Activated T-helper 1 cell treated with anti-CD3 and anti-CD28 coated beads, Interleukin-12 subunit alpha, Interleukin-12 subunit beta, Interleukin-2, Interleukin-4 antibody, amounts not matched to agents 30 ng/mL and 10 ng/mL and 1 ng/mL, durations not matched to agents 14 hours and 24 hours and 36 hours (primary cell): ENCODE measurements at regions of chr9 and their contacts with region 1.

Region 1: DNA sequence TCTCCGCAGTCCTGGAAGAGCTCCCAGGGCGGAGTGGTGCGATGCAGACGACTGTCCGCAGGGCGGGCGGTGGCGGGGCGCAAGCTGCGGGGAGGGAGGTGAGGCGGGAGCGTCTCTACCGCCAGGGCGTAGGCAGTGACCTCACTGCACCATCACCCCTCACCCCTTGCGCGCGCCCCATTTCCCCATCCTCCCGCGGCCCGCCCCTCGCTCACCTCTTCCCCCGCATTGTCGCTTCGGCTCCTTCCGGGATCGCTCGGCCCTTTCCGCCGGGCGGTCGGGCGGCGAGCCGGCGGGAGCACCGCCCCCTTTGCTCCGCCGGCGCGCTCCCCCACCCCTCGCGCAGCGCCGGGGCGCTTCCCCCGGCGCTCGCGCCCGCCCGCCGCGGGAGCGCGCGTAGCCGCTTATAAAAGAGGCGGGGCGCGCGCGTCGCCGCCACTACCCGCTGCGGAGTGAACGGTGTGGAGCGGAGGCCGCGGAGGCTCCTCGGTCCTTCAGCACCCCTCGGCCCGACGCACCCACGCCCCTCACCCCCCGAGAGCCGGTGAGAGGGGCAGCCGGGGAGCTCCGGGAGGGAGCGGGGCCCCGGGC is at the start of gene SPTAN1:
- DNase-seq: peak; percentile 93
- H3K4me3 Mint-ChIP-seq: peak within 1 kb of the TSS; percentile 89
- H3K27ac Mint-ChIP-seq: peak within 1 kb of the TSS; percentile 91
- H3K4me1 Mint-ChIP-seq: peaks cover 43% of the 10 kb centered on the region
- H3K27me3 Mint-ChIP-seq: no peaks in the 10 kb centered on the region
- total RNA-seq, gene SPTAN1: 298 and 304 TPM in 2 replicates

Region 2: DNA sequence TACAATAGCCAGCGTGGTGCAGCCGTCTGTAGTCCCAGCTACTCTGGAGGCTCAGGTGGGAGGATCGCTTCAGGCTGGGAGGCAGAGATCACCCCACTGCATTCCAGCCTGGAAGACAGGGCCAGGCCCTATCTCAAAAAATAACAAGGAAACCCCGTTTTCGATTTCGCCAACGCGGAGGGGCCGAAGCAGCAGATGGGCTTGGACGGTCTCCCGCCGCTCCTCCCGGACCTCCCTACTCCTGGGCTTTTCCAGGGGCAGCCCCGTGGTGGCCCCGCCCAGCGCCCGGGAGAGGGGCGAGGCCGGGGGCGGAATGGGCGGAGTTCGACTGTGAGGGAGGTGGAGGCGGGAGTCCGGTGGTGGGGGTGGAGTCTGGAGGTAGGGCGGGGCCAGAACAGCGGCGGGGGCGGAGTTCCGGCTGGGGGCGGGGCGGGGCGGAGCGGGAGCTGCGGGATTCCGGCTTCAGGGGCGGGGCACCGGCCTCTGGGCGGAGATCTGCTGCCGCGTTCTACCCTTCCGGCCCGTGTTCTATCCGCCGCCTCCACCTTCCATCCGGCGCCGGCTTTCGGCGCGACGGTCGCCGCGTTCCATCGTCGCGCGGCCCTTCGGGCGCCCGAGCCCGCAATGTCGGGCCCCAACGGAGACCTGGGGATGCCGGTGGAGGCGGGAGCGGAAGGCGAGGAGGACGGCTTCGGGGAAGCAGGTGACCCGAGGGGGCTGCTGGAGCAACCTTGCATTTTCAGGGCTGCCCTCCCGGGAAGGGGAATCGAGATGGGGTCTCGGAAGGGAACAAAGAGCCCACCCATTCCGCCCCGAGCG is 392.3 kb before region 1 on chr9 and contains the start of gene BBLN:
- intact Hi-C with region 1: loop called (anchors 5 kb)
- DNase-seq: peak; percentile 88
- H3K4me3 Mint-ChIP-seq: peak within 1 kb of the TSS; percentile 84
- H3K27ac Mint-ChIP-seq: peak within 1 kb of the TSS; percentile 93
- H3K4me1 Mint-ChIP-seq: peaks cover 14% of the 10 kb centered on the region
- H3K27me3 Mint-ChIP-seq: peaks cover 2% of the 10 kb centered on the region
- total RNA-seq, gene BBLN: 97.3 and 106 TPM in 2 replicates

Region 3: DNA sequence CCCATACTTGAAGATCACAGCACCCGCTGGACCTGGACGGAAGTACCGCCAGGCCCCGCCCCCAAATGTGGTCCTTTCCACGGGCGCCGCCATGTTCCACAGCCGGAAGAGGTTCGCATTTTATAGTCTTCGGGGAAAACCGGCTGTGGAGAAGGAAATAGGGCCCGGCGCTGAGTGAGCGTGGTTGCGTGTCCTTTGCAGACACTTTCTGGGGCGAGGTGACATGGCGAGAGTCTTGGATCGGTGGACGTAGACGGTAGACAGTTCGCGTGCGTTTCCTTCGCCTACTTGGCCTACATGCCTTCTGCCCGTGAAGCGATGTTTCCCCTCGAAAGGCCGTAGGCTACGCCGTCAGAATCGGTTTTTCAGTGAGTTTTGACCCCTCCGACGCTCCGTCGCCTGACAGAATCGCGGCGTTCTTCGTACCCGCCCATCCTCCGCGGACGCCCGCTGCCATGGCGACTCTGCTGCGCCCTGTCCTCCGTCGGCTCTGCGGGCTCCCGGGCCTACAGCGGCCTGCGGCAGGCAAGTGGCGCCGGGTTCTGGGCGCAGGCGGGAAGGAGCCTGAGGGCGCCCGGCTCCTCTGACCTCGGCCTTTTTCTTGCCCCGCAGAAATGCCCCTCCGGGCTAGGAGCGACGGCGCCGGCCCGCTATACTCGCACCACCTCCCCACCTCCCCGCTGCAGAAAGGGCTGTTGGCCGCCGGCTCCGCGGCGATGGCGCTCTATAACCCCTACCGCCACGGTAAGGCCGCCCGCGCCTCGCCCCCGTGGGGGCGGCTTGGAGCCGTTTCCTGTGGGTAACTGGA is 229.6 kb before region 1 on chr9 and contains the starts of genes COQ4 and TRUB2:
- intact Hi-C with region 1: loop called (anchors 1 kb)
- DNase-seq: peak; percentile 91
- H3K4me3 Mint-ChIP-seq: peak within 1 kb of the TSS; percentile 98
- H3K27ac Mint-ChIP-seq: peak within 1 kb of the TSS; percentile 100
- H3K4me1 Mint-ChIP-seq: peaks cover 12% of the 10 kb centered on the region
- H3K27me3 Mint-ChIP-seq: peaks cover 2% of the 10 kb centered on the region
- total RNA-seq, gene COQ4: 59.0 and 59.5 TPM in 2 replicates
- total RNA-seq, gene TRUB2: 41.8 and 44.0 TPM in 2 replicates

Region 4: DNA sequence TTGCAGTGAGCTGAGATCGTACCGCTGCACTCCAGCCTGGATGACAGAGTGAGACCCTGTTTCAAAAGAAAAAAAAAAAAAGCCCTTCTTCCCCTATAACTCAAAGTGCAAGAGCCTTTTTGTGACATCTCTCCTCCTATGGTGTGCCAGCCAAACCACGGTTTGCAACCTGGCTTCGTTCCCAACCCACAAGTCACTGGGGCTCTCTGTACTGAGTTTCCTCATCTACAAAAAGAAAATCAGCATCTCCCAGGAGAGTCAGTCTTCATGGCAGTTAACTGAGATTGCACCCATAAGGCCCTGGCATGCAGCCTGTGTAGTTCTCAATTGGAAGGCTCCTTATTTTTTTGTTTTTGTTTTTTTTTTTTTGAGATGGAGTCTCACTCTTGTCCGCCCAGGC is 81.7 kb before region 1 on chr9:
- intact Hi-C with region 1: no loop called
- DNase-seq: no peak
- H3K4me3 Mint-ChIP-seq: no peak overlapping the region
- H3K27ac Mint-ChIP-seq: no peak overlapping the region
- H3K4me1 Mint-ChIP-seq: no peaks in the 10 kb centered on the region
- H3K27me3 Mint-ChIP-seq: no peaks in the 10 kb centered on the region

Region 5: GRCh38 chr9:128504485-128505413 is 47.5 kb before region 1 on chr9 and contains the start of gene GLE1:
- intact Hi-C with region 1: loop called (anchors 1 kb)
- DNase-seq: peak; percentile 97
- H3K4me3 Mint-ChIP-seq: peak within 1 kb of the TSS; percentile 99
- H3K27ac Mint-ChIP-seq: peak within 1 kb of the TSS; percentile 99
- H3K4me1 Mint-ChIP-seq: peaks cover 23% of the 10 kb centered on the region
- H3K27me3 Mint-ChIP-seq: no peaks in the 10 kb centered on the region
- total RNA-seq, gene GLE1: 51.4 and 52.0 TPM in 2 replicates

Region 6: GRCh38 chr9:128521956-128522355 is 30.3 kb before region 1 on chr9:
- intact Hi-C with region 1: no loop called
- DNase-seq: no peak
- H3K4me3 Mint-ChIP-seq: no peak overlapping the region
- H3K27ac Mint-ChIP-seq: no peak overlapping the region
- H3K4me1 Mint-ChIP-seq: no peaks in the 10 kb centered on the region
- H3K27me3 Mint-ChIP-seq: no peaks in the 10 kb centered on the region

Region 7: GRCh38 chr9:128593039-128593438 is 40.8 kb after region 1 on chr9:
- intact Hi-C with region 1: no loop called
- DNase-seq: no peak
- H3K4me3 Mint-ChIP-seq: no peak overlapping the region
- H3K27ac Mint-ChIP-seq: no peak overlapping the region
- H3K4me1 Mint-ChIP-seq: no peaks in the 10 kb centered on the region
- H3K27me3 Mint-ChIP-seq: no peaks in the 10 kb centered on the region

Region 8: GRCh38 chr9:128688512-128689292 is 136.5 kb after region 1 on chr9 and contains the start of gene SET:
- intact Hi-C with region 1: loop called (anchors 2 kb)
- DNase-seq: peak; percentile 93
- H3K4me3 Mint-ChIP-seq: peak within 1 kb of the TSS; percentile 87
- H3K27ac Mint-ChIP-seq: peak within 1 kb of the TSS; percentile 98
- H3K4me1 Mint-ChIP-seq: peaks cover 66% of the 10 kb centered on the region
- H3K27me3 Mint-ChIP-seq: no peaks in the 10 kb centered on the region
- total RNA-seq, gene SET: 775 and 795 TPM in 2 replicates

Region 9: GRCh38 chr9:128902351-128903078 is 350.3 kb after region 1 on chr9:
- intact Hi-C with region 1: loop called (anchors 5 kb)
- DNase-seq: peak; percentile 83
- H3K4me3 Mint-ChIP-seq: peak overlapping the region; percentile 66
- H3K27ac Mint-ChIP-seq: peak overlapping the region; percentile 96
- H3K4me1 Mint-ChIP-seq: peaks cover 65% of the 10 kb centered on the region
- H3K27me3 Mint-ChIP-seq: no peaks in the 10 kb centered on the region

Region 10: DNA sequence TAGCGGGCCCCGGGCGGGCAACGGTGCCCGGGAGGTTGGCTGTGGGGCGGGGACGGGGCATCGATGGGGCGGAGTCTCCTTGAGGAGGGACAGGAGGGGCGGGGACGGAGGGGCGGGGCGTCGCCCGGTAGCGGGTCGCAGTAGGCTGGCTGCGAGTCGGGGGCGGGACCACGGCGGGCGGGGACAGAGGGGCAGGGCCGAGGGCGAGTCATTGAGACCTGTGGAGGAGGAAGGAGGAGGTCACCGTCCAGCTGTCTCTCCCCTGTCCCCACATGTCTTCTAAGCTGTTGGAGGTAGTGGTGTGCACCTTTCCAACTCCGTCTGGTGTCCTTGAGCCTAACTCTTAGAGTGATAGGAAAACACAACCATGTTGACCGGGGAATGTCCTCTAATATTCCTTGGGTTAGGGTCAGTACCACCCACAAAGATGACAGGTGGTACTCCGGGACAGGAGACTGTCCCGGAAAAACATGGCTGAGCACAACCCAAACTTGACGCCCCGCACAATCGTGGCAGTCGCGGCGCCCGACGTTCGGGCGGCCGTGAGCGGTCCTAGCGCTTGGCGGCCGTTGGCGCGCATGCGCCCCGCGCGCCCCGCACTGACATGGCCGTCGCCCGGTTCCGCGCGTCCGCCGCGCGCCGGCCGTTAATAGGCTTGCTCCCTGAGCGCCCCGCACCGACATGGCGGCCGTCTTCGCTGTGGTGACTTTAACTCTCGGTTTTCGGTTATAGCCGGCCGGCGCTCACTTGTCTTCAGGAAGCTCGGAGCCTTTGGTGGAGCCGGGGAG is 558.7 kb after region 1 on chr9 and contains the starts of genes CRAT and PTPA:
- intact Hi-C with region 1: loop called (anchors 2 kb)
- DNase-seq: peak; percentile 89
- H3K4me3 Mint-ChIP-seq: peak within 1 kb of the TSS; percentile 96
- H3K27ac Mint-ChIP-seq: peak within 1 kb of the TSS; percentile 94
- H3K4me1 Mint-ChIP-seq: peaks cover 36% of the 10 kb centered on the region
- H3K27me3 Mint-ChIP-seq: no peaks in the 10 kb centered on the region
- total RNA-seq, gene CRAT: 9.9 and 10.0 TPM in 2 replicates
- total RNA-seq, gene PTPA: 105 and 114 TPM in 2 replicates